ENCODE measurements at regions of chr22 and their contacts with region 1.

Region 1: DNA sequence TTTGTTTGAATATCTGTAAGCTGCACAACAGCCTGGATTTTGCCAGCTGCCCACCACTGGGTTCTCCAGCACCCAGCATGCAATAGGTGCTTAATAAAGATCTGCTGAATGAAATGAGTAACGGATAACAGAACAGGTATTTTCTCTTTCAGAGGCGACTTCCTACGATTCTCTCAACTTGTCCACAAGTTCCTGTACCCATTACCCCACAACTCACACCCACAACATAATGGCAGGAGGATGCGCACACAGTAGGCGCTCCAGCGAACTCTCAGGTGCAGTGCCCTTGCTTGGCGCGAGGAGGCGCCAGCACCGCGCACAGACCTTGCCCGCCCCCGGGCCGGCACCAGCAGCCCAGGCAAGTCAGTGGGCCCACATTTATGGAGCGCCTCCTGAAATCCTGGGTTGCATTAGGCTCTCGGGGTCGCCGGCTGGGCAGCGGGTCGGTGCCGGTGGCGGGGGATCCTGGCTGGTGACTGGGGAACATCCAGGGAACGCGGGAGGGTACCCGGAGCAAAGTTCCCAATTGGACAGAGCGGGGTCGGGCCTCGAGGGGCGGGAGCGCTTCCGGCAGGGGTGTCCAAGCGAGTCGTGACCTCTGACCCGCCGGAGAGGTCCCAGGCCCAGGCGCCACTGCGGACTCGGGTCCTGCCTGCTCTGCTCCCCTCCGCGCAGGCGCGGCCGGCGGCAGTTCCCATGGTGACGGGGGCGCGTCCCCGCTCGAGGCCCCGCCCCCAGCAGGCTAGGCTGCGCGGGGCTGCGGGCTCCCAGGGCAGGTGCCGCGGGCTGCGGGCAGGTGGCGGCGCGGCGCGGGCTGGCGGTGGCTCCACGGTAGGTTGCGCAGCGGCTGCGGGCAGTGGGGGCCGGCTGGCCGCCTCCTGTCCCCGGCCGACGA is at the start of gene KIAA1671:
- DNase-seq: peak; percentile 57 to 70
- ATAC-seq: peak; percentile 90 to 91
- H3K4me3 ChIP-seq: peak within 1 kb of the TSS; percentile 66 to 82 (median 78)
- H3K27ac ChIP-seq: peak within 1 kb of the TSS; percentile 52 to 75 (median 64)
- H3K4me1 ChIP-seq: peaks cover 13 to 18% of the 10 kb centered on the region in 2 donors
- H3K27me3 ChIP-seq: peaks cover 10 to 32% (median 14%) of the 10 kb centered on the region in 3 donors
- CTCF ChIP-seq: peak; percentile 86 to 95 (median 92)
- POLR2A ChIP-seq: peak; percentile 31 to 54
- total RNA-seq, gene KIAA1671: 16.2 to 35.0 (median 21.7) TPM

Region 2: GRCh38 chr22:25007444-25008106 is 55.4 kb after region 1 on chr22:
- in situ Hi-C with region 1: loop called in 1 of 4 experiments (anchors 10 kb)
- intact Hi-C with region 1: no loop called
- DNase-seq: no peak
- ATAC-seq: no peak
- H3K4me3 ChIP-seq: no peak overlapping the region
- H3K27ac ChIP-seq: no peak overlapping the region
- H3K4me1 ChIP-seq: peaks cover 0 to 6% of the 10 kb centered on the region in 2 donors
- H3K27me3 ChIP-seq: no peaks in the 10 kb centered on the region
- CTCF ChIP-seq: no peak
- POLR2A ChIP-seq: no peak

Region 3: GRCh38 chr22:25027959-25028840 is 76.0 kb after region 1 on chr22:
- in situ Hi-C with region 1: no loop called
- intact Hi-C with region 1: loop called (anchors 1 kb)
- DNase-seq: no peak
- ATAC-seq: no peak
- H3K4me3 ChIP-seq: no peak overlapping the region
- H3K27ac ChIP-seq: no peak overlapping the region
- H3K4me1 ChIP-seq: peaks cover 0 to 12% of the 10 kb centered on the region in 2 donors
- H3K27me3 ChIP-seq: no peaks in the 10 kb centered on the region
- CTCF ChIP-seq: peak in 2 of 5 experiments; percentile 41 to 46
- POLR2A ChIP-seq: no peak

Region 4: GRCh38 chr22:25048659-25049647 is 96.8 kb after region 1 on chr22:
- in situ Hi-C with region 1: loop called in 3 of 4 experiments (anchors 5 kb)
- intact Hi-C with region 1: loop called (anchors 1 kb)
- DNase-seq: peak; percentile 27 to 46
- ATAC-seq: peak; percentile 71 to 84
- H3K4me3 ChIP-seq: no peak overlapping the region
- H3K27ac ChIP-seq: no peak overlapping the region
- H3K4me1 ChIP-seq: no peaks in the 10 kb centered on the region
- H3K27me3 ChIP-seq: no peaks in the 10 kb centered on the region
- CTCF ChIP-seq: peak; percentile 81 to 86 (median 84)
- POLR2A ChIP-seq: no peak

Region 5: DNA sequence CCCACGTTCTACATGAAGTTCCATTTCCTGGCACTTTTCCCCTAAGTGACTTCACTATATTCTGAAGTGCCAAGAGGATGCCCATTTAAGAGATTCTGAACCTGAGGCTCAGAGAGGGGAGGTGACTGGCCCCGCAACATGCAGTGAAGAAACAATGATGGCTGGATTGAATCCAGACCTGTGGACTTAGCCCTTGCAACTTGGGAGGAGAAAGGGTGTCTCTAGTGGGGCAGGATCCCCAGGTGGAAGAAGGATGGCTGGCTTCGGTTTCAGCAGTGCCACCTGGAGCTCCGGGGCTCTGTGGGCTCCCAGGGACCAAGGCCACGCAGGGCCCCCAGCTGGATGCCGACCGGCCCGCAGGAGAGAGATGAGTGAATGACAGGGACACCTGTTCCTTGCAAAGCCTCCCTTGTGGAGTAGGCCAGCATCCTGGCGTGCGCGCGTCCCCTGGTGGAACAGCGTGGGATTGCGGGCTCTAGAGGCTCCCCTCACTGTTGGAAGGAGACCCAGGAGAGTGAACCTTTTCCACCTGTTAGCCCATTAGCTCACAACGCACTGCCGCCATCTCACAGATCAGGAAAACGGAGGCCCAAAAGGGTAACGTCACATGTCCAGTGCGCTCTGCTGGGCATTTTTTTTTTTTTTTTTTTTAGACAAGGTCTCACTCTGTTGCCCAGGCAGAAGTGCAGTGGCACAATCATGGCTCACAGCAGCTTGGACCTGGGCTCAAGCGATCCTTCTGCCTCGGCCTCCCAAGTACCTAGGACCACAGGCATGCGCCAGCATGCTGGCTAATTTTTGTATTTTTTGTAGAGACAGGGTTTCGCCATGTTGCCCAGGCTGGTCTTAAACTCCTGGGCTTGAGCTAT is 105.1 kb after region 1 on chr22:
- in situ Hi-C with region 1: loop called in 1 of 4 experiments (anchors 5 kb)
- intact Hi-C with region 1: no loop called
- DNase-seq: peak; percentile 37 to 66
- ATAC-seq: peak; percentile 75 to 84
- H3K4me3 ChIP-seq: no peak overlapping the region
- H3K27ac ChIP-seq: no peak overlapping the region
- H3K4me1 ChIP-seq: no peaks in the 10 kb centered on the region
- H3K27me3 ChIP-seq: no peaks in the 10 kb centered on the region
- CTCF ChIP-seq: peak; percentile 71 to 89 (median 86)
- POLR2A ChIP-seq: no peak

Measured in gastrocnemius medialis (tissue), 4 donors.